ENCODE measurements at regions of chr2 and their contacts with region 1.

Region 1: GRCh38 chr2:47767880-47768609 is 14.9 kb upstream of the MSH6 start:
- DNase-seq: peak; percentile 75
- H3K4me3 Mint-ChIP-seq: no peak overlapping the region
- H3K27ac Mint-ChIP-seq: no peak overlapping the region
- H3K4me1 Mint-ChIP-seq: peaks cover 3% of the 10 kb centered on the region
- H3K27me3 Mint-ChIP-seq: no peaks in the 10 kb centered on the region

Region 2: DNA sequence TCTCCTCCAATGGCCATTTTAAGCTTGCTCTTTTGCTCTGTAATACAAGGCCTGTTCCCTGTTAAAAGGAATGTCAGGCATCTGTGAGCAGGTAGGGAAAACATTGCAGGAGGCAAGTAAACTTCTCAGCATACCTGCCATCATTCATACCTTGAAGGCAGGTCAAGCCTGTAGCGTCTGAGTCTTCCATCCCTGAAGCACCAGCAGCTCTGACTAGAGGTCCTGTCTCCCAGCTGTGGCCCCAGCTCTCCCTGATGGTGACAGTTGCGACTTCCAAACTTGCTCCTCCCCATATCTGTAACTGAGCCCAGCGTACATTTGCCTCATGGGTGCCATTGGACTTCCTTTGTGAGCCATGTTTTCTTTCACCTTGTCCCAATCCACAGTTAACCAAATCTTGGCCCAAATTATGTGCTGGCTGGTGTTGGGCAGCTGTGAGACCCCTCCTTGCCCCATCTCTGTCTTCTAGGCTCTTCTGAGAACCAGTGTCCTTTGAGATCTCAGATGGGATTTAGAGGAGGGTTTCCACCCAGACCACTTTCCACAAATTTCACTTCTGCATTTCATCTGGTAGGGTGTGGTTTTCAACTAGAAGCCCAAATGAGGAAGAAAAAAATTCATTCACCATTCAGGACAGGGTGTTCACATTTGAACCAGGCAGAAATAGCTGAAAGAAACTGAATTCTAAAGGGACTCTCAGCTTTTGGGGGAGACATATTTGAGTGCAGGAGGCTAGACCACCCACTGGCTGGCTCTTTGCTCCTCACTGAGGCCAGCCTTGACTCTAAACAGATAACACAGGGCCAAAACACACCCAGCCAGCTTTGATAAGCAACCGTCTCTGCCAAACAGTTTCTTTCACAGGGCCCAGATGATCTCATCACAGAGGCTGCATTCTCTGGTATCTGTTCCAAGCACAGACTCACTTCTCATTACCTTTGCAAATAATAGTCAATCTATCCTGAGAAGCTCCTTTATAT is 431.5 kb before region 1 on chr2:
- CTCF ChIA-PET with region 1: interaction called, 49 read pairs
- POLR2A ChIA-PET with region 1: no interaction called
- DNase-seq: no peak
- H3K4me3 Mint-ChIP-seq: no peak overlapping the region
- H3K27ac Mint-ChIP-seq: no peak overlapping the region
- H3K4me1 Mint-ChIP-seq: no peaks in the 10 kb centered on the region
- H3K27me3 Mint-ChIP-seq: peaks cover 9% of the 10 kb centered on the region

Region 3: DNA sequence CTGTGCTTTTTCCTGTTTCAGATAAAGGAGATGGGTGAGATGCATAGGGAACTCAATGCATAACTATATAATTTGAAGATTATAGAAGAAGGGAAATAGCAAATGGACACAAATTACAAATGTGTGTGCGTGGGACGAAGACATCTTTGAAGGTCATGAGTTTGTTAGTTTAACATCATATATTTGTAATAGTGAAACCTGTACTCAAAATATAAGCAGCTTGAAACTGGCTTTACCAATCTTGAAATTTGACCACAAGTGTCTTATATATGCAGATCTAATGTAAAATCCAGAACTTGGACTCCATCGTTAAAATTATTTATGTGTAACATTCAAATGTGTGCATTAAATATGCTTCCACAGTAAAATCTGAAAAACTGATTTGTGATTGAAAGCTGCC is 381.5 kb before region 1 on chr2:
- CTCF ChIA-PET with region 1: interaction called, 16 read pairs
- POLR2A ChIA-PET with region 1: no interaction called
- DNase-seq: no peak
- H3K4me3 Mint-ChIP-seq: no peak overlapping the region
- H3K27ac Mint-ChIP-seq: no peak overlapping the region
- H3K4me1 Mint-ChIP-seq: no peaks in the 10 kb centered on the region
- H3K27me3 Mint-ChIP-seq: peaks cover 25% of the 10 kb centered on the region

Region 4: DNA sequence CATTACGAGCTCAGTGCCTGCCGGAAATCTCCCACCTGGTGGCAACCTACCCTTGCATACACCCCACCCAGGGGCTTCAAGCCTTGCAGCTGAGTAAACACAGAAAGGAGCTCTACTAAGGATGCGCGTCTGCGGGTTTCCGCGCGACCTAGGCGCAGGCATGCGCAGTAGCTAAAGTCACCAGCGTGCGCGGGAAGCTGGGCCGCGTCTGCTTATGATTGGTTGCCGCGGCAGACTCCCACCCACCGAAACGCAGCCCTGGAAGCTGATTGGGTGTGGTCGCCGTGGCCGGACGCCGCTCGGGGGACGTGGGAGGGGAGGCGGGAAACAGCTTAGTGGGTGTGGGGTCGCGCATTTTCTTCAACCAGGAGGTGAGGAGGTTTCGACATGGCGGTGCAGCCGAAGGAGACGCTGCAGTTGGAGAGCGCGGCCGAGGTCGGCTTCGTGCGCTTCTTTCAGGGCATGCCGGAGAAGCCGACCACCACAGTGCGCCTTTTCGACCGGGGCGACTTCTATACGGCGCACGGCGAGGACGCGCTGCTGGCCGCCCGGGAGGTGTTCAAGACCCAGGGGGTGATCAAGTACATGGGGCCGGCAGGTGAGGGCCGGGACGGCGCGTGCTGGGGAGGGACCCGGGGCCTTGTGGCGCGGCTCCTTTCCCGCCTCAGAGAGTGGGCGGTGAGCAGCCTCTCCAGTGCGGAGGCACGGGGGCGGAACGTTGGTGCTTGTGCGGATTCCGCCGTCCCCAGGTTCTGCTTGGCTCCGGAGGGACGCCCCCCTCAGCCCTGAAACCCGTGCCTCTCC is 365.0 kb before region 1 on chr2 and contains the start of gene MSH2:
- CTCF ChIA-PET with region 1: interaction called, 12 read pairs
- POLR2A ChIA-PET with region 1: no interaction called
- DNase-seq: peak; percentile 93
- H3K4me3 Mint-ChIP-seq: peak within 1 kb of the TSS; percentile 94
- H3K27ac Mint-ChIP-seq: peak within 1 kb of the TSS; percentile 82
- H3K4me1 Mint-ChIP-seq: peaks cover 39% of the 10 kb centered on the region
- H3K27me3 Mint-ChIP-seq: no peaks in the 10 kb centered on the region
- total RNA-seq, gene MSH2: 39.0 to 39.3 TPM

Region 5: GRCh38 chr2:47437287-47437686 is 330.8 kb before region 1 on chr2:
- CTCF ChIA-PET with region 1: interaction called, 28 read pairs
- POLR2A ChIA-PET with region 1: no interaction called
- DNase-seq: no peak
- H3K4me3 Mint-ChIP-seq: no peak overlapping the region
- H3K27ac Mint-ChIP-seq: no peak overlapping the region
- H3K4me1 Mint-ChIP-seq: no peaks in the 10 kb centered on the region
- H3K27me3 Mint-ChIP-seq: no peaks in the 10 kb centered on the region

Region 6: GRCh38 chr2:47520825-47521665 is 247.0 kb before region 1 on chr2:
- CTCF ChIA-PET with region 1: interaction called, 15 read pairs
- POLR2A ChIA-PET with region 1: no interaction called
- DNase-seq: peak; percentile 85
- H3K4me3 Mint-ChIP-seq: peak overlapping the region; percentile 84
- H3K27ac Mint-ChIP-seq: peak overlapping the region; percentile 93
- H3K4me1 Mint-ChIP-seq: peaks cover 34% of the 10 kb centered on the region
- H3K27me3 Mint-ChIP-seq: no peaks in the 10 kb centered on the region

Region 7: GRCh38 chr2:47751875-47752357 is 16.1 kb before region 1 on chr2:
- CTCF ChIA-PET with region 1: interaction called, 10 read pairs
- POLR2A ChIA-PET with region 1: no interaction called
- DNase-seq: no peak
- H3K4me3 Mint-ChIP-seq: peak overlapping the region; percentile 34
- H3K27ac Mint-ChIP-seq: peak overlapping the region; percentile 81
- H3K4me1 Mint-ChIP-seq: peaks cover 15% of the 10 kb centered on the region
- H3K27me3 Mint-ChIP-seq: no peaks in the 10 kb centered on the region